CD4-positive, alpha-beta memory T cell (primary cell): ENCODE measurements at regions of chr9 and their contacts with region 1.

Region 1: DNA sequence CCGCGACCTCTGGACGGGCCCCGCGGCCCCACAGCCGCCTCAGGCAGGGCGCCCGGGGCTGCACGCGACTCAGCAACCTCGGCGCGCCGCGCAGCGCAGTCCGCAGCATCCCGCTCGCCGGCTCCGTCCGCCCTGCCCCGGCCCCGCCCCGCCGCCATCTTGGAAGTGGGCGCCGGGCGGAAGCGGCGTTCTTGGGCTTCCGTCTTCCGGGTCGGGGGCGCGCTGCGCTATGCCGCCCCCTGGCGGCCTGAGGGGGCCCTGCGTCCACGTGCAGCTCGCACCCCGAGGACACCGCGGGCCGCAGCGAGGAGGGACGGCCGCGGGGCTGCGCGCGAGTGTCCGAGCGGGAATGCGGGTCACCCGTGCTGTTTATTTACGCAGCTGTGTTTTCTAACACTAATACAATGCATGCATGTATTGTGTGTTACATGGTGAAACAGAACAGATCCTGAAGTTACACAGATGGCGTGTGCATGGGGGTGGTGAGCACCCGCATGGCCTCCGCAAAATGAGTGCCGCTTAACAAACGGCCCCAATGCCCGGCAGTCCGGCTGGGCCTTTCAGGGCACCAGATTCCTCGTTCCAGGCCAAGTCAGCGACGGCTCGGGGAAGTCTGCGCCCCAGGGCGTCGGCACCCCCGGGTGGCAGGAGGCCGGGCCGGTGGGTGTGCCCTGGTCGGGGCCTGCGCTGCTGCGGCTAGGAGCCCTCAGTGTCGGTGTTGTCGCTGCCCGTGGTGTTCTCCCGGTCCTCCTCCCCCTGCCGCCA is at the start of gene DNLZ:
- DNase-seq: peak; percentile 81 to 90 (median 88)
- H3K4me3 ChIP-seq: peak within 1 kb of the TSS in 1 of 2 donors; percentile 59
- H3K4me3 Mint-ChIP-seq: peak within 1 kb of the TSS; percentile 83 to 91 (median 86)
- H3K27ac ChIP-seq: peak within 1 kb of the TSS; percentile 76
- H3K27ac Mint-ChIP-seq: peak within 1 kb of the TSS; percentile 78 to 92 (median 85)
- H3K4me1 ChIP-seq: peaks cover 14% of the 10 kb centered on the region
- H3K4me1 Mint-ChIP-seq: peaks cover 0 to 9% (median 0%) of the 10 kb centered on the region in 4 donors
- H3K27me3 ChIP-seq: no peaks in the 10 kb centered on the region
- H3K27me3 Mint-ChIP-seq: no peaks in the 10 kb centered on the region
- total RNA-seq, gene DNLZ: 26.0 to 32.3 TPM

Region 2: GRCh38 chr9:136245219-136246150 is 118.3 kb before region 1 on chr9 and contains the start of gene QSOX2:
- CTCF ChIA-PET with region 1: interaction called, 3 read pairs
- POLR2A ChIA-PET with region 1: no interaction called
- intact Hi-C with region 1: loop called (anchors 1 kb)
- DNase-seq: peak; percentile 78 to 89 (median 84)
- H3K4me3 ChIP-seq: peak within 1 kb of the TSS; percentile 50 to 57
- H3K4me3 Mint-ChIP-seq: peak within 1 kb of the TSS; percentile 91 to 97 (median 94)
- H3K27ac ChIP-seq: peak within 1 kb of the TSS; percentile 32
- H3K27ac Mint-ChIP-seq: peak within 1 kb of the TSS; percentile 85 to 94 (median 92)
- H3K4me1 ChIP-seq: peaks cover 35% of the 10 kb centered on the region
- H3K4me1 Mint-ChIP-seq: peaks cover 25 to 40% (median 32%) of the 10 kb centered on the region in 4 donors
- H3K27me3 ChIP-seq: no peaks in the 10 kb centered on the region
- H3K27me3 Mint-ChIP-seq: no peaks in the 10 kb centered on the region
- total RNA-seq, gene QSOX2: 14.8 to 15.0 TPM

Region 3: DNA sequence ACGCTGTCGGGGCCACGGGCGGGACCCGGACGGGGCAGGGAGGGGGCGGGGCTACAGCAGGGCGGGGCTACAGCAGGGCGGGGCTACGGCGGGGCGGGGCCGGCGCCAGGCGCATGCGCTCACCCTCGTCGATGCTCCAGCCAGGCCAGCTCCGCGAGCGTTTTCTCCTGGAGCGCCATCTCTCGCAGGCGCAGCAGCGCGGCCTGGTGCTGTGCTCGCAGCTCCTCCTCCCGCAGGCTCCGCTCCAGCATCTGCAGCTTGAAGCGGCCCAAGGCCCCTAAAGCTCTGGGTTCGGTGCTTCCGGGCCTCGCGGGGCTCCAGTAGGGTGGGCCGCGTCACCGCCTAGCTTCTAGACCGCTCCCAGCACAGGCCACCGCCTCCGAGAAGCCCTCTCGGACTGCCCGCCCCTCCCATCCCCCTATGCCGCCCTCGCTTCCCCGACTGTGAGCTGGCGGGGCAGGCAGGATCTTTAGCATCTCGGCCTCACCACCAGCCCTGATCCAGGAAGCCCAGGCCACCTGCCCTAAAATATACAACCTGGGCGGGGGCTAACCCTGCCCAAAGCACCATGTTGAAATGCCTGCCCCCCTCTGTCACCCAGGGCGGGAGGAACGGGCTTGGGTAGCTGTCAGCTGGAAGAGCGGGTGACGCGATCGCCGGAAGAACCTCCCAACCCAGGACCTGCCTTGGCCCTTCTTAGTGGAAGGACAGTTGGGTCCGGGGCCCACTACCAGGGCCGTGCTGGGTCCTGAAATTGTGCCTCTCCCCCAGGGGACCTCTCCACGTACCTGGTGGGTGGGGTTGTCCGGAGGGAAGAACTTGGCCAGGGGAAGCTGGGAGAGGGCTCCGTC is 96.3 kb before region 1 on chr9:
- CTCF ChIA-PET with region 1: no interaction called
- POLR2A ChIA-PET with region 1: interaction called, 6 read pairs
- intact Hi-C with region 1: loop called (anchors 1 kb)
- DNase-seq: peak; percentile 81 to 86 (median 83)
- H3K4me3 ChIP-seq: peak overlapping the region; percentile 47 to 70
- H3K4me3 Mint-ChIP-seq: peak overlapping the region; percentile 67 to 90 (median 84)
- H3K27ac ChIP-seq: peak overlapping the region; percentile 49
- H3K27ac Mint-ChIP-seq: peak overlapping the region; percentile 35 to 92 (median 81)
- H3K4me1 ChIP-seq: peaks cover 7% of the 10 kb centered on the region
- H3K4me1 Mint-ChIP-seq: peaks cover 2 to 12% (median 4%) of the 10 kb centered on the region in 4 donors
- H3K27me3 ChIP-seq: no peaks in the 10 kb centered on the region
- H3K27me3 Mint-ChIP-seq: peaks cover 0 to 6% of the 10 kb centered on the region in 2 donors

Region 4: DNA sequence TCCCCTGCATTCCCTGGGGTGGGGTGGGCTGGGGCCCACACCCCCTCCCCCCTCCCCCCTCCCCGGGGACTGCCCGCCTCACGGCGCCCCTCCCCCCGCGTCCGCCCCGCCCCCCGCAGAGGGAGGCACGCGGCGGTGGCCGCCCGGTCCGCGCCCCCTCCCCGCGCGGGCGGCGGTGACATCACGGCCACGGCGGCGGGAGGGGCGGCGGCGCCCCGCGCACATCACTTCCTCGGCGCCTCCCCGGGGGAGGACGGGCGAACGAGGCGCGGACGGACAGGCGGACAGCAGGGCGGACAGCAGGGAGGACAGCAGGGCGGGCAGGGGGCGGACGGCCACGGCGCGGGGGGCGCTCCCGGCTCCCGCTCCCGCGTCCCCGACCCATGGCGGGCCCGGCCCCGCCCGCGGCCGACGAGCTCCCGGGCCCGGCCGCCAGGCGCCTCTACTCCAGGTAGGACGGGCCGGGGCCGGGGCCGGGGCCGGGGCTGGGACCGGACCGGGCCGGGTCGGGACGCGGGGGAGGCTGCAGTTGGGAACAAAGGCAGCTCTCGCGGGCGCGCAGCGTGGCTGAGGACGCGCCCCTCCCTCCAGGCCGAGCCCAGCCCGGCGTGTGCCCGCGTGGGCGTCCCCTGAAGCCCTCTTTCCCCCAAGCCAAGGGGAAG is 36.3 kb before region 1 on chr9 and contains the start of gene GPSM1:
- CTCF ChIA-PET with region 1: no interaction called
- POLR2A ChIA-PET with region 1: interaction called, 6 read pairs
- intact Hi-C with region 1: loop called (anchors 1 kb)
- DNase-seq: peak; percentile 25 to 51 (median 49)
- H3K4me3 ChIP-seq: peak within 1 kb of the TSS in 1 of 2 donors; percentile 24
- H3K4me3 Mint-ChIP-seq: peak within 1 kb of the TSS; percentile 54 to 83 (median 70)
- H3K27ac ChIP-seq: no peak within 1 kb of the TSS
- H3K27ac Mint-ChIP-seq: peak within 1 kb of the TSS in 1 of 7 donors; percentile 71
- H3K4me1 ChIP-seq: peaks cover 16% of the 10 kb centered on the region
- H3K4me1 Mint-ChIP-seq: peaks cover 0 to 8% (median 4%) of the 10 kb centered on the region in 4 donors
- H3K27me3 ChIP-seq: no peaks in the 10 kb centered on the region
- H3K27me3 Mint-ChIP-seq: no peaks in the 10 kb centered on the region
- total RNA-seq, gene GPSM1: 7.6 to 8.1 TPM

Region 5: GRCh38 chr9:136385015-136385414 is 21.2 kb after region 1 on chr9:
- CTCF ChIA-PET with region 1: interaction called, 8 read pairs
- POLR2A ChIA-PET with region 1: interaction called, 11 read pairs
- intact Hi-C with region 1: no loop called
- DNase-seq: peak in 4 of 5 donors; percentile 53 to 69 (median 65)
- H3K4me3 ChIP-seq: no peak overlapping the region
- H3K4me3 Mint-ChIP-seq: peak overlapping the region in 5 of 8 donors; percentile 46 to 65 (median 51)
- H3K27ac ChIP-seq: no peak overlapping the region
- H3K27ac Mint-ChIP-seq: peak overlapping the region in 4 of 7 donors; percentile 17 to 77 (median 60)
- H3K4me1 ChIP-seq: peaks cover 22% of the 10 kb centered on the region
- H3K4me1 Mint-ChIP-seq: peaks cover 0 to 27% (median 14%) of the 10 kb centered on the region in 4 donors
- H3K27me3 ChIP-seq: no peaks in the 10 kb centered on the region
- H3K27me3 Mint-ChIP-seq: no peaks in the 10 kb centered on the region

Region 6: GRCh38 chr9:136400038-136400834 is 36.4 kb after region 1 on chr9 and contains the start of gene SNAPC4:
- CTCF ChIA-PET with region 1: interaction called, 20 read pairs
- POLR2A ChIA-PET with region 1: interaction called, 27 read pairs
- intact Hi-C with region 1: loop called (anchors 1 kb)
- DNase-seq: peak; percentile 80 to 87 (median 85)
- H3K4me3 ChIP-seq: peak within 1 kb of the TSS; percentile 36 to 57
- H3K4me3 Mint-ChIP-seq: peak within 1 kb of the TSS; percentile 83 to 90 (median 88)
- H3K27ac ChIP-seq: peak within 1 kb of the TSS; percentile 55
- H3K27ac Mint-ChIP-seq: peak within 1 kb of the TSS; percentile 30 to 93 (median 79)
- H3K4me1 ChIP-seq: peaks cover 51% of the 10 kb centered on the region
- H3K4me1 Mint-ChIP-seq: peaks cover 28 to 50% (median 40%) of the 10 kb centered on the region in 4 donors
- H3K27me3 ChIP-seq: no peaks in the 10 kb centered on the region
- H3K27me3 Mint-ChIP-seq: no peaks in the 10 kb centered on the region
- total RNA-seq, gene SNAPC4: 13.1 to 15.4 TPM

Region 7: DNA sequence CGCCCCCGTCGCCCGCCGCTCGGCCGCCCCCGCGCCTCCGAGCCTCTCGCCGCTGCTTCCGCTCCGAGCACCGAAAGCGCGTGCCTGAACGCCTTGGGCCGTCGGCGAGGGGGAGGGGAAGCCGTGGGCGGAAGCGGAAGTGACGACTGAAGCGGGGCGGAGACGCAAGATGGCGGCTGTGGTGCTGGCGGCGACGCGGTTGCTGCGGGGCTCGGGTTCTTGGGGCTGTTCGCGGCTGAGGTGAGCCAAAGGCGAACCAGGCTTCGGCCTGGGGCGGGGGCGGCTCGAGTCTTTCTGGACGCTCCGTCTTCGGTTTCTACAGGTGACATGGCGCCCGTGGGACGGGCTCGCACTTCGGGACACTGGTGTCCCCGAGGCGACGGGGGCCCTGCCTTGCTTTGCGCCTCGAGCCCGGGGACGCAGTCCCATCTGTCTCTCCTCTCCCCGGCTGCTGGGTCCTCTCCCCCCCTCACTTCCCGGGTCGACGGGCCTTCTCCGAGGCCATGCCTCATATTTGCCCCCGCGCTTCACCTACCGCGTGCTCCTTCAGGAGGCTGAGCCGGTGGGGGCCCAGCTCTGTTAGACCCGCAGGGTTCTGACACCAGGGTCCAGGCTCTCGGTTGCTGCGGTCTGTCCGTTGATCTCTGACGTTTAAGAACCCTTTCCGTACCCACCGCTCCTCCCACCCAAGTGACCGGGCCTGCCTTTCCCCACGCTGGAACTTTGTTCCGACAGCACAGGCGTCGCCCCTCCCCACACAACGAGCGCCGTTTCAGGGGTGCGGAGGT is 46.9 kb after region 1 on chr9 and contains the starts of genes ENTR1 and PMPCA:
- CTCF ChIA-PET with region 1: interaction called, 7 read pairs
- POLR2A ChIA-PET with region 1: interaction called, 21 read pairs
- intact Hi-C with region 1: no loop called
- DNase-seq: peak; percentile 93 to 94 (median 93)
- H3K4me3 ChIP-seq: peak within 1 kb of the TSS; percentile 71 to 85
- H3K4me3 Mint-ChIP-seq: peak within 1 kb of the TSS; percentile 87 to 92 (median 90)
- H3K27ac ChIP-seq: peak within 1 kb of the TSS; percentile 93
- H3K27ac Mint-ChIP-seq: peak within 1 kb of the TSS; percentile 81 to 96 (median 94)
- H3K4me1 ChIP-seq: peaks cover 35% of the 10 kb centered on the region
- H3K4me1 Mint-ChIP-seq: peaks cover 23 to 59% (median 40%) of the 10 kb centered on the region in 4 donors
- H3K27me3 ChIP-seq: no peaks in the 10 kb centered on the region
- H3K27me3 Mint-ChIP-seq: no peaks in the 10 kb centered on the region
- total RNA-seq, gene ENTR1: 82.9 to 85.9 TPM
- total RNA-seq, gene PMPCA: 71.8 to 73.3 TPM